ENCODE measurements at regions of chr6 and their contacts with region 1.

Region 1: GRCh38 chr6:19804205-19805123 is 32.7 kb upstream of the ID4 start:
- DNase-seq: peak; percentile 96
- H3K4me3 ChIP-seq: peak overlapping the region; percentile 6 to 61 (median 44)
- H3K27ac ChIP-seq: peak overlapping the region; percentile 53
- H3K4me1 ChIP-seq: peaks cover 6% of the 10 kb centered on the region
- H3K27me3 ChIP-seq: peaks cover 0 to 5% of the 10 kb centered on the region in 2 experiments
- CTCF ChIP-seq: no peak
- POLR2A ChIP-seq: no peak

Region 2: GRCh38 chr6:19719691-19720128 is 84.8 kb before region 1 on chr6:
- CTCF ChIA-PET with region 1: no interaction called
- POLR2A ChIA-PET with region 1: no interaction called
- dilution Hi-C with region 1: no loop called
- intact Hi-C with region 1: no loop called
- DNase-seq: no peak
- H3K4me3 ChIP-seq: no peak overlapping the region
- H3K27ac ChIP-seq: no peak overlapping the region
- H3K4me1 ChIP-seq: no peaks in the 10 kb centered on the region
- H3K27me3 ChIP-seq: no peaks in the 10 kb centered on the region
- CTCF ChIP-seq: no peak
- POLR2A ChIP-seq: no peak

Region 3: GRCh38 chr6:19836799-19837510 is 32.5 kb after region 1 on chr6 and contains the start of gene ID4:
- CTCF ChIA-PET with region 1: no interaction called
- POLR2A ChIA-PET with region 1: no interaction called
- dilution Hi-C with region 1: no loop called
- intact Hi-C with region 1: loop called (anchors 2 kb)
- DNase-seq: peak; percentile 18
- H3K4me3 ChIP-seq: peak within 1 kb of the TSS in 1 of 3 experiments; percentile 14
- H3K27ac ChIP-seq: no peak within 1 kb of the TSS
- H3K4me1 ChIP-seq: no peaks in the 10 kb centered on the region
- H3K27me3 ChIP-seq: peaks cover 20 to 58% of the 10 kb centered on the region in 2 experiments
- CTCF ChIP-seq: no peak
- POLR2A ChIP-seq: no peak
- total RNA-seq, gene ID4: not detected in 2 replicates

Region 4: DNA sequence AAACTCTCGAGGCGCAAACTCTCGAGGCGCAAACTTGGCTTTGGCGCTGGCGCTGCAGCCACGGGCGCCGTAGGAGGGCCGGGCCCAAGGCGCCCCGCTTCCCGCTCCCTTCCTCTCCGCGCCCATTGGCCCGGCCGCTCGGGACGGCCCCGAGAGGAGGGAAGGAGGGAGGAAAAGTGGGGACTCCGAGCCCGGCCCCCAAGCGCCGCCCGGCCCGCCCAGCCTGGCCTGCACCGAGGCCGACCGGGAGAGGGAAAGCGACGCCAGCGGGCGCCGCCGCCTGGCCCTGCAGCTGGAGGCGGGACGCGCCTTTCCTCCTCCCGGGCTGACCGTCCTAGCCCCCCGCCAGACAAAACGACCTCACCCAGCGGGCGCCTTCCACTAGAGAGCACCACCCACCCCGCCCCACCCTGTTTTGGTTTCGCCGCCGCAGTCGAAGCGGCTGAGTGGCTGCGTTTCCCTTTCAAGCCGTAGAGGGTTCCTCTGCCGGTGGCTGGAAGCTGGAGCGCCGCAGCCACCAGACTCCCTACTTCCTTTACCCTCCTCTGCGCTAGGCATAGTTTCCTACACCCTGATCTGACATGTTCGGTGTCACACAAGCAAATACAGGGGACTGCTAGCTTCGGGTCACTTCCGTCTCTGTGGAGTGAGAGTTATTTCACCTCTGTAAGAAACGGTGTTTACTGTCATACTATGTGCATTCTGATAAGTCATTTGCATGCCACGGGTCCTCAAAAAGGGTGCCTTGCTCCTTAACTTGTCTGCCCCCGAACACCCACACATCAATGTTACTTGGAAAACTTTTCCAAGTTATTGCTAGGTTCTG is 408.1 kb after region 1 on chr6 and contains the start of gene MBOAT1:
- CTCF ChIA-PET with region 1: no interaction called
- POLR2A ChIA-PET with region 1: no interaction called
- dilution Hi-C with region 1: no loop called
- intact Hi-C with region 1: loop called (anchors 5 kb)
- DNase-seq: peak; percentile 92
- H3K4me3 ChIP-seq: peak within 1 kb of the TSS; percentile 21 to 80 (median 58)
- H3K27ac ChIP-seq: peak within 1 kb of the TSS; percentile 55
- H3K4me1 ChIP-seq: peaks cover 15% of the 10 kb centered on the region
- H3K27me3 ChIP-seq: no peaks in the 10 kb centered on the region
- CTCF ChIP-seq: peak in 1 of 2 donors; percentile 22
- POLR2A ChIP-seq: peak; percentile 72
- total RNA-seq, gene MBOAT1: 4.8 and 5.4 TPM in 2 replicates

Measured in endothelial cell of umbilical vein (primary cell).